Spleen (tissue), 13 donors: ENCODE measurements at regions of chr7 and their contacts with region 1.

Region 1: GRCh38 chr7:92621026-92621540 is 30.9 kb upstream of the FAM133B start:
- DNase-seq: no peak
- H3K4me3 ChIP-seq: no peak overlapping the region
- H3K27ac ChIP-seq: peak overlapping the region in 6 of 8 donors; percentile 7 to 62 (median 40)
- H3K4me1 ChIP-seq: peaks cover 4 to 28% (median 13%) of the 10 kb centered on the region in 6 donors
- H3K27me3 ChIP-seq: no peaks in the 10 kb centered on the region
- CTCF ChIP-seq: peak; percentile 41 to 82 (median 65)
- POLR2A ChIP-seq: no peak

Region 2: DNA sequence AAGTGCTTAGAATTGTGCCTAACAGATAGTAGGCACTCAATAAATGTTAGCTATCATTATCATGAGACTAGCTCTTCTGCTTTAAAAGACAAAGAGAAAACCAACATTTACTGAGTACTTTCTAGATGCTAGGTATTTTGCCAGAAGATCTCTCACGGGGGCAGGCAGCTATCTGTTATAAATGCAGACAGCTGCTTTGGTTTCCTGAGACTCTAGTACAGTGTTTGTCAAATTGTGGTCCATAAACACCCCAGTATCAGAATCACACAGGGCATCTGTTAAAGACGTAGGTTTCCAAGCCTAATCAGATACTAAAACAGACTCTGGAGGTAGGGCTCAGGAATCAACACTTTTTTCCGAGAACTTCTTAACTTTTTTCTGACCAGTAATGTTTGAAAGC is 44.8 kb before region 1 on chr7:
- intact Hi-C with region 1: no loop called
- DNase-seq: no peak
- H3K4me3 ChIP-seq: no peak overlapping the region
- H3K27ac ChIP-seq: no peak overlapping the region
- H3K4me1 ChIP-seq: no peaks in the 10 kb centered on the region
- H3K27me3 ChIP-seq: no peaks in the 10 kb centered on the region
- CTCF ChIP-seq: no peak
- POLR2A ChIP-seq: no peak

Region 3: DNA sequence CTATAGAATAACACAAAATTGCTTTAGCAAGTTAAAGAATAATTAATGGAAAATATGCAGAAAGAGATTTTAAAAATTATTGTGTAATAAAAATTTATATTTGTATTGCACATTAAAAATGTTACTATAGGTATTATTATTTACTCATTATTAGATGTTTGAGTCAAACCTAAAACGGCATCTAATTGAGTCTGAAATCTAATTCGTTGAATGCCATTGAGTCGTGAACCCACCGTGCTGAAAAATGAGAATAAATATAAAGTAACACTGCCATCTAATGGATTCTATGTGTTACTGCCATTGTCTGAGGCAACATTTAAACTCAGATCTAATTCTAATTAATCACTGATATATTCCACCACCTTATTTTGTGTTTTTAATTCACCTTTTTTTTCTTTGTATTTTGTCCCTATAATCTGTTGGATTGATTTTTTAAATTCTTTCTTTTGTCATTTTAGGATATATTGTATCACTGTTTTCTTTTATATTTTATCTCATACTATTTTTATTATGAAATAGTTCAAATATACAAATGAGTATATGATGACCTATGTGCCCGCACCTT is 434.5 kb after region 1 on chr7:
- intact Hi-C with region 1: loop called (anchors 5 kb)
- DNase-seq: no peak
- H3K4me3 ChIP-seq: no peak overlapping the region
- H3K27ac ChIP-seq: no peak overlapping the region
- H3K4me1 ChIP-seq: peaks cover 0 to 22% (median 6%) of the 10 kb centered on the region in 6 donors
- H3K27me3 ChIP-seq: no peaks in the 10 kb centered on the region
- CTCF ChIP-seq: peak; percentile 63 to 86 (median 81)
- POLR2A ChIP-seq: no peak